Heart left ventricle (tissue), 16 donors: ENCODE measurements at regions of chr9 and their contacts with region 1.

Region 1: GRCh38 chr9:32854271-32854670 is 70.9 kb downstream of the TMEM215 start:
- DNase-seq: no peak
- ATAC-seq: no peak
- H3K4me3 ChIP-seq: no peak overlapping the region
- H3K27ac ChIP-seq: no peak overlapping the region
- H3K4me1 ChIP-seq: no peaks in the 10 kb centered on the region
- H3K27me3 ChIP-seq: peaks cover 0 to 7% (median 0%) of the 10 kb centered on the region in 9 donors
- CTCF ChIP-seq: no peak
- POLR2A ChIP-seq: no peak

Region 2: GRCh38 chr9:32776201-32776600 is 78.1 kb before region 1 on chr9:
- intact Hi-C with region 1: loop called in 1 of 10 experiments (anchors 10 kb)
- DNase-seq: no peak
- ATAC-seq: no peak
- H3K4me3 ChIP-seq: no peak overlapping the region
- H3K27ac ChIP-seq: no peak overlapping the region
- H3K4me1 ChIP-seq: no peaks in the 10 kb centered on the region
- H3K27me3 ChIP-seq: peaks cover 0 to 19% (median 4%) of the 10 kb centered on the region in 9 donors
- CTCF ChIP-seq: no peak
- POLR2A ChIP-seq: no peak

Region 3: GRCh38 chr9:32811246-32811645 is 43.0 kb before region 1 on chr9:
- intact Hi-C with region 1: loop called in 1 of 10 experiments (anchors 5 kb)
- DNase-seq: no peak
- ATAC-seq: no peak
- H3K4me3 ChIP-seq: no peak overlapping the region
- H3K27ac ChIP-seq: no peak overlapping the region
- H3K4me1 ChIP-seq: no peaks in the 10 kb centered on the region
- H3K27me3 ChIP-seq: no peaks in the 10 kb centered on the region
- CTCF ChIP-seq: no peak
- POLR2A ChIP-seq: no peak

Region 4: DNA sequence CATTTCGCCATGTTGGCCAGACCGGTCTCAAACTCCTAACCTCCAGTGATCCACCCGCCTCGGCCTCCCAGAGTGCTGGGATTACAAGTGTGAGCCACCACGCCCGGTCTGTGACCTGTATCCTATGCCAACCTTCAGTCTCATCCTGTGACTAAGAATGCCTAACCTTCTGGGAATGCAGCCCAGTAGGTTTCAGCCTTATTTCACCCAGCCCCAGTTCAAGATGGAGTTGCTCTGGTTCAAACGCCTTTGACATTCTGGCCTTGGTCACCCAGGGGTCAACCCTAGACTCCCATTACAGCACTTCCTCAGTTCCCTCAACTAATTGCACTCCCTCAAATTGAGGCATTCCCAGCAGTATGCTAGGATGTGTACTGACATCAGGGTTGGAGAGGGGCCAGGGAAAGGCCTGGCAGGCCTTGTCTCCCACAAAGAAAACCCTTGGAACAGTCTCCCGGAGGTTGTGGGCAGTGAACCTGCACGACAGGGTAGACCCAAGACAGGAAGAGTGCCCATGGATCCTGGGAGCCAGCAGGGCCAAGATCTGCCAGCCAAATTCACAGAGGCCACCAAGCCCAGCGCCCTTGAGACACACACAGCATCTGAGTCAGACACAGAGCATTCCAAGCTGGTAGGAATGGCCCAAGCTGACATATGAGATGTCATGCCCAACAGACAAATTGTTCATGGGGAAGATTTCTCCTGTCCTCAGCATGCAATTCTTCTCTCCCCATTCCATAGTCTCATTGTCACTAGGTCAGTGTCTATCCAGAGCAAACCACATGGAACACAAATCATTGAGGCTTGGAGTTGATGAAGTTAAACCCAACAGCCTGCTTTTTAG is 247.1 kb after region 1 on chr9:
- intact Hi-C with region 1: no loop called
- DNase-seq: no peak
- ATAC-seq: peak in 3 of 4 donors; percentile 21 to 58 (median 55)
- H3K4me3 ChIP-seq: no peak overlapping the region
- H3K27ac ChIP-seq: peak overlapping the region in 5 of 12 donors; percentile 8 to 27 (median 18)
- H3K4me1 ChIP-seq: peaks cover 0 to 38% (median 19%) of the 10 kb centered on the region in 12 donors
- H3K27me3 ChIP-seq: no peaks in the 10 kb centered on the region
- CTCF ChIP-seq: no peak
- POLR2A ChIP-seq: no peak